Caco-2 (cell line): ENCODE measurements at regions of chr4 and their contacts with region 1.

Region 1: GRCh38 chr4:124322234-124323065 is 390.1 kb downstream of the ANKRD50 start:
- DNase-seq: peak in 1 of 2 experiments; percentile 3
- H3K4me3 ChIP-seq: no peak overlapping the region
- H3K4me3 Mint-ChIP-seq: no peak overlapping the region
- H3K27ac Mint-ChIP-seq: no peak overlapping the region
- H3K4me1 ChIP-seq: no peaks in the 10 kb centered on the region
- H3K4me1 Mint-ChIP-seq: no peaks in the 10 kb centered on the region
- H3K27me3 ChIP-seq: no peaks in the 10 kb centered on the region
- H3K27me3 Mint-ChIP-seq: peaks cover 4% of the 10 kb centered on the region
- CTCF ChIP-seq: peak; percentile 42 to 62

Region 2: DNA sequence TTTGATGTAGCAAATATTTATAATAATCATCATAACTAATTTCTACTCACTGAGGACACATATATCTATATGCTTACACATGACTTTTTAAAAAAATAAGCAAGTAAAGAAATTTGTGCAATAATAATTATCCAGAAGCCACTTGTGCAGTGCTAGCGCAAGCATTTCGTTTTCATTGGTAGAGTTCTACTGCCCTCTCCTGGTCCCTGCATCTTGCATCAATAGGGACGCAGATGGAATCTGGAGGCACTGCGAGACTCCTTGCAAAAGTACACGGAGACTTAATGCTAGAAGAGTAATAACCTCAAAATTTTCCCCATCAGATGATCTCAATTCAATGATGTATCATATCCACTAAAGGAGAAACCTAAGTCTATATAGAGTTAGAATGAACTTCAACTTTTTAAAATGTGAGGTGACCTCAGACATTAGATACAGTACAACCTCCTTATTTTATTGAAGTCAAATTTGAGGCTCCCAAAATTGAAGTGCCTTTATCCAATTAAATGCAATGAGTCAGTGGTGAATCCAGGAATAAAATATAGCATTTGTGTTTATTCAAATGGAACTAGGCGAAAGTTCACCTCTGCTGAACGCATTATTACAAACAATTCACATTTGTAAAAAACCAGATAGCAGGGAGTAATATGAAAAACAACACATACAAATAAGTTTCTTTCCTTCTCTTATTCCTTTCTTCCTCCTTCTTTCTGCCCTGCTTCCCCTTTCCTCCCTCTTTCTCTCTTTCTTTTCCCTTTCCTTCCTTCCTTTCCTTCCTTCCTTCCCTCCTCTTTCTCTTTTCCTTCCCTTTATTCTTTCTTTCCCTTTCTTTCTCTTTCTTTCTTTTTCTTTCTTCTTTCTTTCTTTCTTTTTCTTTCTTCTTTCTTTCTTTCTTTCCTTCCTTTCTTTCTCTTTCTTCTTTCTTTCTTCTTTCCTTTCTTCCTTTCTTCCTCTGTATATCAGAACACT is 60.0 kb before region 1 on chr4:
- CTCF ChIA-PET with region 1: no interaction called
- POLR2A ChIA-PET with region 1: no interaction called
- intact Hi-C with region 1: loop called (anchors 1 kb)
- DNase-seq: peak; percentile 58 to 74
- H3K4me3 ChIP-seq: no peak overlapping the region
- H3K4me3 Mint-ChIP-seq: no peak overlapping the region
- H3K27ac Mint-ChIP-seq: no peak overlapping the region
- H3K4me1 ChIP-seq: no peaks in the 10 kb centered on the region
- H3K4me1 Mint-ChIP-seq: no peaks in the 10 kb centered on the region
- H3K27me3 ChIP-seq: no peaks in the 10 kb centered on the region
- H3K27me3 Mint-ChIP-seq: peaks cover 6% of the 10 kb centered on the region
- CTCF ChIP-seq: peak; percentile 77 to 79

Region 3: DNA sequence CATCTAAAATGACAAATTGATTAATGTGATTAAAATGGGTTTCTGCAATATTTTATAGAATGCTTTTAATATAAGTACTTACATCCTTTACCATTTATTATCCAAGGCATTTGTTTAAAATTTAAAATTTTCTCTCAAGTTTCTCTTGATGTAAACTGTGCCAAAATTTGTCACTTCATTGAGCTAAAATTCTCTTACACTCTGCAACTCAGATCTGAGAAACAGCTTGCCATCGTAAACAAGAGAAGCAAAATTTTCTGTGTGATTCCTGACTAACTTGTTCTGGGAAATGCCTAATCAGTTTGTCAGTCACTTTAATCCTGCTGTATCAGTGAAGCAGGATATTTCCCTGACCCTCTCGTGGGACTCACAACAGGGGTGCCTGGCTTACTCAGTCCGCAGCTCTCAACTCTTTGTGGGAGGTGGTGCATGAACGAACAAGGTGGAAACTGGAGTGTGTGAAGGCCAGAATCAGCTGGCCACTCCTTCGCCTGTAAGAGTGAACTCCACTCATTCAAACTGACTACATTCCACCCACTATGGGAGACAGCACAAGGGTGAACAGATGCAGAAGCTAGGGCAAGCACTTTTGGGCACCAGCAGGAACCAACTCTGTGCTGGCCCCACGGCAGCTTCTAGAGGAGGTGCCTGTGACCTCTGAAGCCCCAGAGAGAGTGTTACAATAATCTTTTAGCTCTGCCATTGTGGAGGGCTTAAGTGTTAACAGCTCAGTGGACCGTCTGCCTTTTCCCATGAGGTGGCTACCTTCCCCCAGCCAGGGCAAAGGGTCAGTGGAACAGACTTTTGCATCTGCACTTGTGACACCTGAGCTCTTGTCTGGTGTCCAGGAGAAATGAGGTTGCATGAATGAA is 1341.7 kb after region 1 on chr4:
- CTCF ChIA-PET with region 1: no interaction called
- POLR2A ChIA-PET with region 1: no interaction called
- intact Hi-C with region 1: no loop called
- DNase-seq: no peak
- H3K4me3 ChIP-seq: no peak overlapping the region
- H3K4me3 Mint-ChIP-seq: no peak overlapping the region
- H3K27ac Mint-ChIP-seq: no peak overlapping the region
- H3K4me1 ChIP-seq: no peaks in the 10 kb centered on the region
- H3K4me1 Mint-ChIP-seq: no peaks in the 10 kb centered on the region
- H3K27me3 ChIP-seq: no peaks in the 10 kb centered on the region
- H3K27me3 Mint-ChIP-seq: peaks cover 2% of the 10 kb centered on the region
- CTCF ChIP-seq: no peak